Right ventricle myocardium inferior (tissue), 1 donor: ENCODE measurements at regions of chr10 and their contacts with region 1.

Region 1: GRCh38 chr10:95290461-95291364 is at the start of gene PDLIM1:
- DNase-seq: peak; percentile 89
- ATAC-seq: peak; percentile 89
- total RNA-seq, gene PDLIM1: 273 TPM

Region 2: GRCh38 chr10:95214793-95215192 is 75.9 kb before region 1 on chr10:
- intact Hi-C with region 1: no loop called
- DNase-seq: no peak
- ATAC-seq: no peak

Region 3: DNA sequence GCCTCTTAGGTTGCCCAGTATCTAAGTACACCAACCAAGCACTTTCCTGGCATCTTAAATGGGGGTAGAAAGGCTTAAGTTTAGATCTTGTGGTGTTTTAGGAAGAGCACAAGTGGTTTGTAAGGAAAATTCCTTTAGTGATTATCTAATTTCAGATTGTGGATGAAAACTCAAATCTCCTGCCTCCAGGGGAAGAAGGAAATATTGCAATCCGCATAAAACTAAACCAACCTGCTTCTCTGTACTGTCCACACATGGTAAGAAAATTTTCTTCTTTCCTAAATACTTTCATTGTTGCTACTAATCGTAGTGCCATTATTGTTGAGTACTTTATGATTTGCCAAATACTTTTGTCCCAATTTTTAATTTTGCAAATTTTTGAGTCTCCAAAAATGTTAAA is 65.6 kb before region 1 on chr10:
- intact Hi-C with region 1: no loop called
- DNase-seq: no peak
- ATAC-seq: no peak

Region 4: GRCh38 chr10:95308389-95309302 is 17.9 kb after region 1 on chr10:
- intact Hi-C with region 1: no loop called
- DNase-seq: no peak
- ATAC-seq: peak; percentile 45

Region 5: DNA sequence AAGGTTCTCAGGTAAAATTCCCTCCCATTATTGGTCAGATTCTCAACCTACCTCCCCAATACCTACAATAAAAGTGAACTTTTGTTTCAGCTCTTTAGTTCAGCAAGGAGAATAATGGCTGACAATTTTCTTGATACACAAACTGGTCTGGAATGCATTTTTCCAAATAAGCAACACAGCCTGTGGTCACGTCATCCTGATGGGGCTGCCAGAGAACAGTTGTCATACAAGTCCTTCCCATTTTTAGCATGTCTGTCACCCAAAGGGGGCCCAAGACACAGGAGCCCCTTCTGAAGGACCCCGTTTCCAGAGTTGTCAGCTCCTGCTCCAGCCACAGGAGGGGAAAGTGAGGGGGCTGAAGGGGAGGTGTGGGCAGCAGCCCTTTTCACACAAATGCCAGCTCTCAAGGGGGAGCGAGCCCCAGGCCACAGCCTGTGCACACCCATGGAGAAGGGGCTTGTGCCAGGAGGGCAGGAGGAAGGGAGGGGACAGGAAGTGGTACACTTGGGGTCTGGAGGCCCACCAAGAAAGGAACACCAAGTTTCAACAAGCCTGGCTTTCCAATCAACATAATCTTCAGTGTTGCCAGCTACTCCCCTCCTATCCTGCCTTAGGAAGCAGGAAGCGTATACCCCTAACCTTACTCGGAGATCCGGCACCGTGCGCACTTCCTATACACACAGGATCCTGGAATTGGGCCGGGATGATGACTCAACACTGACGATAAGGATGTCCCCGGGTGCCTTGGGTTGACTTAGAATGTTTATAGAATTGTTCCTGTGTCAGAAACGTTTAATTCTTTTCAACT is 43.5 kb after region 1 on chr10:
- intact Hi-C with region 1: loop called (anchors 2 kb)
- DNase-seq: peak; percentile 87
- ATAC-seq: peak; percentile 86

Region 6: DNA sequence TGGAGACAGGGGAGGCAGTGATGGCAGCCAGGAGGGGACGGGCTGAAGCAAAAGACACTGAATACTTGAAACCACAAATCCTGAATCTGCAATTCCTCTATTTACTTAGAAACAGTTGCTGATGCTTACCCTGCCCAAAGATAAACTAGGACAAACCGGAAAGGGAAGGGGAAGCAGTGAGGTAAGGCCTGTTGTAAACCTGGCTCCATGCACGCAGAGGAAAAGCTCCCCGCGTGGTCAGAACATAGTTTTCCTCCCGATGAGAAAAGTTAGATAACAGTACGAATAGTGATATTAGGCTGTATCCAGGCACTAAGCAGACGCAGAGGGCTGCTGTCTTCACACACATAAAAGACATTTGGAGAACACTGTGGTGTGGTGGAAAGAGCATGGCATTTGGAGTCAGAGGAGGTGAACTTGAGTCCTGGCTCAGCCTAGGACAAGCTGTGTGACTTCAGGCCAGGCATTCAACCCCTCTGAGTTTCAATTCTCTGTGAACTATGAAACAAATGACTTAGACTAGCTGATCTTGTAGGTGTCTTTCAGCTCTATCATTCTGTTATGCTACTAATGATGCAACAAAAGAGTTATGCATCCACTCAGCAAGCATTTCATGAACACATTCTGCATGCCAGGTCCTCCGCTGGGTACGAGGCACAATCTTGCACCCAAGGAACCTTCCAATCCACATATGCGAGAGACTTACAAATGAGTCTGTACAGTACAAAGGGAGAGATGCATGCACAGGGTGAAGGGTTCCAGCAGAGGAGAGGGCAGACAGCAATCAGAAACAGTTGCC is 189.6 kb after region 1 on chr10:
- intact Hi-C with region 1: loop called (anchors 5 kb)
- DNase-seq: no peak
- ATAC-seq: peak; percentile 53

Region 7: DNA sequence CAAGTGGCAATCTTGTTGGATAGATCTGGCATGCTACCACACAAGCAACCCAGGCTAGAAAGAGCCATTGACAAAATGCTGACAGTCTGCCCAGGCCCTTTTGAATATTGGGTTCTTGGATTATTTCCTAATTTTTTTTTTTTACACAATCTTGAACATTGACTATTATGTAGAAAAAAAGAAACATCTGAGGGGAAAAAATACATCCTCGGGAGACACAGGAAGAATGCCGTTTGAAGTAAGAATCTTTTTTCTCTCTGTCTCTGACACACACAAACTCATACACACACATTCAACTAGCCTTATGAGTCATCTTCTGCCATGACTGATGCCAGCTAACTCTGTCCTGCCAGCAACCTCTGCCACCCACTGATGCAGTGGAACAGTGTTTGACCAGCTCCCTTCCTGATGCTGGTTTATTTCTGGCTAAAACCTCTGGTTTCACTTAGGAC is 223.3 kb after region 1 on chr10:
- intact Hi-C with region 1: no loop called
- DNase-seq: no peak
- ATAC-seq: peak; percentile 59